OCI-LY7 (cell line): ENCODE measurements at regions of chr11 and their contacts with region 1.

Region 1: GRCh38 chr11:128552783-128553661 is 34.3 kb downstream of the ETS1 start:
- DNase-seq: peak; percentile 97
- H3K4me3 ChIP-seq: peak overlapping the region; percentile 61
- H3K27ac ChIP-seq: peak overlapping the region; percentile 97
- H3K4me1 ChIP-seq: peaks cover 80% of the 10 kb centered on the region
- CTCF ChIP-seq: no peak

Region 2: DNA sequence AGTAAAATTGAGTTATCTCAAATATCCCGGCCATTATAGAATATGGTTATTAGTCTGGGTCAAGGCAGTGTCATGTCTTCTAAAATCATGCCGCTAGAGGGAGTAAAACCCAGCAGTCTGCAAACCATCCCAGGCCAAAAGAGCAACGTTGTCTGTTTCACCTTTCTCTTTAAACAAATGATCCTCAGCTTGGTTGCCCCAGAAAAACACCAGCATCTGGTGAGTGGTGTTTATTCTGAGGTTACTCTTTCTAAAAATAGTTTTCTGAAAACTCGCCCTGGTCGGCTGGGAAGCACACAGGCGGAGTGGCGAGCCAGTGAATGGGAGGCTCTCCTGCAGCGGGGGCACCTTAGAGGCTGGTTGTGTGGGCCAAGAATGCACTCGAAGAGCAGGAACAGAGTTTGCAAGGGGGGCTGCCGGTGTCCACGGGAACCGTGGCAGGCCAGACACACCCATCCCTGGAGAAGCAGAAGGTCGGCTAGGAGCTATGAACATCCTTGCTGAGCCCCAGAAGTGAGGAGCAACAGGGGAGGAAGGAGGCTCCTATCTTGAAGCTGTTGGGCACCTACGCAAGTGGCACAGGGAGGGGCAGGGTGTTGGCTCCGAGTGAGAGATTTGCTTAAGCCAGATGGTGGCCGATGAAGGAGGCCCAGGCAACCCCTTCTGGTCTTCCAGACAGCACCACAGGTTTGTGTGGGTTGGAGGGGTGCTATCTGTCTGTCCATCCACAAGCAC is 262.7 kb before region 1 on chr11:
- CTCF ChIA-PET with region 1: interaction called, 7 read pairs
- POLR2A ChIA-PET with region 1: interaction called, 6 read pairs
- intact Hi-C with region 1: loop called (anchors 1 kb)
- DNase-seq: peak; percentile 92
- H3K4me3 ChIP-seq: peak overlapping the region; percentile 43
- H3K27ac ChIP-seq: peak overlapping the region; percentile 63
- H3K4me1 ChIP-seq: peaks cover 35% of the 10 kb centered on the region
- CTCF ChIP-seq: peak; percentile 99

Region 3: GRCh38 chr11:128431931-128432330 is 121.1 kb before region 1 on chr11:
- CTCF ChIA-PET with region 1: no interaction called
- POLR2A ChIA-PET with region 1: no interaction called
- intact Hi-C with region 1: no loop called
- DNase-seq: no peak
- H3K4me3 ChIP-seq: no peak overlapping the region
- H3K27ac ChIP-seq: no peak overlapping the region
- H3K4me1 ChIP-seq: no peaks in the 10 kb centered on the region
- CTCF ChIP-seq: no peak

Region 4: GRCh38 chr11:128491195-128491936 is 61.7 kb before region 1 on chr11:
- CTCF ChIA-PET with region 1: no interaction called
- POLR2A ChIA-PET with region 1: no interaction called
- intact Hi-C with region 1: no loop called
- DNase-seq: no peak
- H3K4me3 ChIP-seq: no peak overlapping the region
- H3K27ac ChIP-seq: peak overlapping the region; percentile 21
- H3K4me1 ChIP-seq: peaks cover 53% of the 10 kb centered on the region
- CTCF ChIP-seq: no peak

Region 5: DNA sequence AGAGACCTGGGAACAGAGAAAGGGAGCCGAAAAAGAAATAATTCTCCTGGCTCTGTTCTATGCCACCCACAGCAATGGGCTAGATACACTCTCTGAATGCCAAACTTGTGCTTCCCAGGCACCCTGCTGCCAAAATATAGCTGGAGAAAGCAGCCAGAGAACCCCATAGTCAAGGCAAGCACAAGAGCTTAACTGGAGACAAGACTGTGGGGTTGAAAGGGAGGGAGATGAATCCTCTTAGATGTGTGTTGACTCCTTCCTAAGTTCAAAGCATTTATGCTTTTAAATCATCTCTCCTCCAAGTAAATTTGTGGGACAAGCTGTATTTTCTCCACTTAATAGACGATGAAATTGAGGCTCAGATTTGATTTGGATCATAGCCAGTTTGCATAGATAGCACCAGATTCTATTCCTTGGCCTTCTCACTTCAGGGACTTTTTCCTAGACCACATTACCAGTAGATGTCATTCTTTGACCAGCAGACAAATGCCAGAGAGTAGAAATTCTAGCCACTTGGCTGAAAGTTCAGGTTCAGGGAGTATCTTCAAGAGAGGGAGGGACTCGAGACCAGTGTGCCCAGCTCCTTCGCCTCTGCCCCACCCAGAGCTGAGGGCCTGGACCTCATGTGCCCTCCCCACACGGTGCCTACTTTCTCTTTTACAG is 50.9 kb after region 1 on chr11:
- CTCF ChIA-PET with region 1: interaction called, 9 read pairs
- POLR2A ChIA-PET with region 1: interaction called, 108 read pairs
- intact Hi-C with region 1: no loop called
- DNase-seq: peak; percentile 80
- H3K4me3 ChIP-seq: no peak overlapping the region
- H3K27ac ChIP-seq: peak overlapping the region; percentile 33
- H3K4me1 ChIP-seq: peaks cover 81% of the 10 kb centered on the region
- CTCF ChIP-seq: peak; percentile 77

Region 6: DNA sequence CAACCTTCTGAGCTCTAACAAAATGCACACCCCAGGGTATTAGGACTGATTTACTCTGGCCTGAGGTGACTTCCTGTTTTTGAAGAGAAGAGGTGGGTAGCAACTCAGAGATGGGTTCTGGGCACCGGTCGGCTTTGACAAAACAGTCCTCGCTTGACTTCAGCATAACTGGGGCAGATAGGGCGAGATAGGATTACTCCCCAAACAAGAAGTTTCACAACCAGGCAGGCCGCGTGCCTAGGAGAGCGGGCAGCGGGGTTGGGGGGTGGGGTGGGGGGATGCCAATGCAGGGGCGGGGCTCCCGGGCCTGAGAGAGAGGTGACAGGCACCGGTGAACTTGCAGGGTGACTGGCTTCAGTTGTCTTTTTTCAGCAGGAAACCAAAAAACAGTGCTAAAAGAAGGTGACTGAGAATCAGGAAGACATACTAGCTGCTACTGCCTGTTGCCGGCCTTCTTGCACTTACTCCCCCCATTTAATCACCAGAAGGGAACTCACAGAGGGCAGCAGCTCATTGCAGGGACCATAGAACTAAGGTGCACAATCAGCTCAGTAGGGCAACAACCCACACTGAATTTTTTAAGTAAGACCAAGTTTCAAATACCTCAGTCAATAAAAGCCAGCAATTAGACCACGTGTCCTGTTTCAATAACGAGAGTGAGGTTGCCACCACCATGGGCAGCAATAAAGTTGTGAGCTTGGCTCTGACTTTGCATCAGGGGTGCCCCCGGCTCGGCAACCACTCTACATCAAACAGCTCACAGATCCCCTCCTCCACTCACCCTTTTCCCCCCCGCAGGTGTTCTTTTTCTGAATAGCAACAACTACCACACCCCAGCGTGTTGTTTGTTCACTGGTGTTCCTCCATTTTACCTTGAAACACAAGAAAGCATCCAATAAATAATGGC is 71.5 kb after region 1 on chr11:
- CTCF ChIA-PET with region 1: interaction called, 37 read pairs
- POLR2A ChIA-PET with region 1: interaction called, 159 read pairs
- intact Hi-C with region 1: loop called (anchors 1 kb)
- DNase-seq: peak; percentile 90
- H3K4me3 ChIP-seq: peak overlapping the region; percentile 46
- H3K27ac ChIP-seq: peak overlapping the region; percentile 97
- H3K4me1 ChIP-seq: peaks cover 100% of the 10 kb centered on the region
- CTCF ChIP-seq: no peak

Region 7: GRCh38 chr11:128841461-128842072 is 288.5 kb after region 1 on chr11:
- CTCF ChIA-PET with region 1: no interaction called
- POLR2A ChIA-PET with region 1: no interaction called
- intact Hi-C with region 1: loop called (anchors 2 kb)
- DNase-seq: peak; percentile 84
- H3K4me3 ChIP-seq: peak overlapping the region; percentile 37
- H3K27ac ChIP-seq: peak overlapping the region; percentile 96
- H3K4me1 ChIP-seq: peaks cover 85% of the 10 kb centered on the region
- CTCF ChIP-seq: no peak

Region 8: DNA sequence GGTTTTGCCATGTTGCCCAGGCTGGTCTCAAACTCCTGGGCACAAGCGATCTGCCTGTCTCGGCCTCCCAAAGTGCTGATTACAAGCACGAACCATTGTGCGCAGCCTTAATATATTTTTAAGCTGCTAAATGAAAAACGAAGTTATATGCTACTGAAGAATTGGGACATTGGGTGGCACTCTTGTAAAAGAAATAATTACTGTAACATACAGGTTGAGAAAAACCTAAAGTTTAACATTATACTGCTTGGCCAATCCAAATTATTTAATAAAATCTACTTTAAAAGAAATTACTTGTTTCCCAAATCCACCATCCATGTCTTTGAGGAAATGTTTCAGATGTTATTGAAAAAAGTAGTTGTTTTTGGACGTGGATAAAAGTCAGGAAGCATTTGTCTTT is 677.0 kb after region 1 on chr11:
- CTCF ChIA-PET with region 1: no interaction called
- POLR2A ChIA-PET with region 1: no interaction called
- intact Hi-C with region 1: no loop called
- DNase-seq: no peak
- H3K4me3 ChIP-seq: no peak overlapping the region
- H3K27ac ChIP-seq: no peak overlapping the region
- H3K4me1 ChIP-seq: no peaks in the 10 kb centered on the region
- CTCF ChIP-seq: no peak; the same call in 1 of the 2 replicates